Activated B cell treated with CpG ODN at 0.5 μM for 24 hours (primary cell): ENCODE measurements at regions of chr6 and their contacts with region 1.

Region 1: DNA sequence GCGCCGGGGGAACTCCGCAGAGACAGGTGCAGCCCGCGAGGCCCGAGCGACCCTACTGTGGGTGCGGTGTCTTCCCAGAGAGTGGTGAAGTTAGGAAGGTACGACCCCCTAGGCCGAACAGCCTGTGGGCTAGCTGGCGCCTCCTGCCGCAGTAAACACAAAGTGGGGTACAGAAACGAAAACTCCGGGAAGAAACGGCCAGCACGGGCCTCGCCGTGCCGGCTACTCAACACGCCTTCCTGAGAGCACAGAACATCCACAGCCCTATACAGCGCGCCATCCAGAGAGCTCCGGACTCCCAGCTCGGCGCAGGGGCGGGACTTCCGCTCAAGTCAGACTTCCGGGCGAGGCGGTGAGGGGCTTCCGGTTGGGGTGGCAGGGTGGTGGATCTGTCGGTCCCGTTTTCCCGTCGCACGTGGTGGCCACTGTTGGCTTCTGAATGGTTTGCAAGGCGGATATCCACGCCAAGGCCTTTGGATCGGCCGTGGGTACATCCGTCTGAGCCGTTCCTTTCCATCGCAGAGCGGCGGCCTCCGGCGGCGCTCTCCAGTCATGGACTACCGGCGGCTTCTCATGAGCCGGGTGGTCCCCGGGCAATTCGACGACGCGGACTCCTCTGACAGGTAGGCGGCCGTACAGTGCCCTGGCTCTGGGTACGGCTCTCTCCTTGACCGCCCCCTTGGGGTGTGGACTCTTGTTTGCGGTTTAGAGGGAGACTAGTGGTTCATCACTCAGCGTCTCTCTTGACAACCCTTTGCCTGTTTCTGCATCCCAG is at the starts of genes CAGE1 and RIOK1:
- DNase-seq: peak; percentile 93
- ATAC-seq: peak; percentile 87
- H3K4me3 Mint-ChIP-seq: peak within 1 kb of the TSS; percentile 96
- H3K27ac Mint-ChIP-seq: peak within 1 kb of the TSS; percentile 100
- H3K4me1 Mint-ChIP-seq: peaks cover 34% of the 10 kb centered on the region
- H3K27me3 Mint-ChIP-seq: no peaks in the 10 kb centered on the region
- CTCF ChIP-seq: no peak
- total RNA-seq, gene CAGE1: 0.07 and 0.20 TPM in 2 replicates
- total RNA-seq, gene RIOK1: 38.3 and 38.7 TPM in 2 replicates

Region 2: DNA sequence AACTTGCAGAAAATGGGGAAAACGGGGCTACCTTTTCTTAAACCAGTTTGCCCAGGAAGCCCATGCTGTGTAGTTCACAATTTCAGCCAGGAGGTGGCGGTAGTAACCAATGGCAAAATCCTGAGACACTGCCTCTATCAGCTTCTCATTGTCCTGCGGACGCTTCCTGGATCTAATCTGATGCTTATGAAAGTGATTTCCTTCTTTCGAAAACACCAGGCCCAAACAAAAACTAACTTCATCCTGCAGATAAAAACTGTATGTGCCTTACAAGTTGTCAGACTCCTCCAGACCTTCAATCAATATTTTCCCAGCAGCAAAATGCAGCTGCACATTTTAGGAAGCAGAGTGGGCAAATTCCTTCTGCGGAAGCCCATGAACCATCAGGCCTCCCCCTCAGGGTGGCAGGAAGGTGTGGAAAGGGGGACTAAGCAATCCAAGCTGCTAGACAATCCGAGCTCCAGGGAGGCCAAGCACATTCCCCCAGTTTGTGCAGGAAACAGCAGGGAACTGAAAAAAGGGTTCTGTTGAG is 712.7 kb before region 1 on chr6:
- CTCF ChIA-PET with region 1: no interaction called
- POLR2A ChIA-PET with region 1: no interaction called
- intact Hi-C with region 1: loop called (anchors 5 kb)
- DNase-seq: peak; percentile 65
- ATAC-seq: peak; percentile 94
- H3K4me3 Mint-ChIP-seq: no peak overlapping the region
- H3K27ac Mint-ChIP-seq: no peak overlapping the region
- H3K4me1 Mint-ChIP-seq: peaks cover 8% of the 10 kb centered on the region
- H3K27me3 Mint-ChIP-seq: peaks cover 6% of the 10 kb centered on the region
- CTCF ChIP-seq: peak; percentile 95

Region 3: DNA sequence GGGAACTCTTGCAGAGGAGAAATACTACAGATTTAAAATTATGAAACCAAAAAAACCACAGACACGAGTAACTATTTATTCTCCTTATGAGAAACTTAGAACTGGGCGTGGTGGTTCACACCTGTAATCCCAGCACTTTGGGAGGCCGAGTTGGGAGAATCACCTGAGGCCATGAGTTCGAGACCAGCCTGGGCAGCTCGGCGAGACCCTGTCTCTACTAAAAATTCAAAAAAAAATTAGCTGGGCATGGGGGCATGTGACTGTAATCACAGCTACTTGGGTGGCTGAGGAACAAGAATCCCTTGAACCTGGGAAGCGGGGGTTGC is 113.5 kb before region 1 on chr6:
- CTCF ChIA-PET with region 1: interaction called, 39 read pairs
- POLR2A ChIA-PET with region 1: interaction called, 75 read pairs
- intact Hi-C with region 1: loop called (anchors 1 kb)
- DNase-seq: no peak
- ATAC-seq: no peak
- H3K4me3 Mint-ChIP-seq: peak overlapping the region; percentile 53
- H3K27ac Mint-ChIP-seq: peak overlapping the region; percentile 67
- H3K4me1 Mint-ChIP-seq: peaks cover 36% of the 10 kb centered on the region
- H3K27me3 Mint-ChIP-seq: no peaks in the 10 kb centered on the region
- CTCF ChIP-seq: no peak

Region 4: DNA sequence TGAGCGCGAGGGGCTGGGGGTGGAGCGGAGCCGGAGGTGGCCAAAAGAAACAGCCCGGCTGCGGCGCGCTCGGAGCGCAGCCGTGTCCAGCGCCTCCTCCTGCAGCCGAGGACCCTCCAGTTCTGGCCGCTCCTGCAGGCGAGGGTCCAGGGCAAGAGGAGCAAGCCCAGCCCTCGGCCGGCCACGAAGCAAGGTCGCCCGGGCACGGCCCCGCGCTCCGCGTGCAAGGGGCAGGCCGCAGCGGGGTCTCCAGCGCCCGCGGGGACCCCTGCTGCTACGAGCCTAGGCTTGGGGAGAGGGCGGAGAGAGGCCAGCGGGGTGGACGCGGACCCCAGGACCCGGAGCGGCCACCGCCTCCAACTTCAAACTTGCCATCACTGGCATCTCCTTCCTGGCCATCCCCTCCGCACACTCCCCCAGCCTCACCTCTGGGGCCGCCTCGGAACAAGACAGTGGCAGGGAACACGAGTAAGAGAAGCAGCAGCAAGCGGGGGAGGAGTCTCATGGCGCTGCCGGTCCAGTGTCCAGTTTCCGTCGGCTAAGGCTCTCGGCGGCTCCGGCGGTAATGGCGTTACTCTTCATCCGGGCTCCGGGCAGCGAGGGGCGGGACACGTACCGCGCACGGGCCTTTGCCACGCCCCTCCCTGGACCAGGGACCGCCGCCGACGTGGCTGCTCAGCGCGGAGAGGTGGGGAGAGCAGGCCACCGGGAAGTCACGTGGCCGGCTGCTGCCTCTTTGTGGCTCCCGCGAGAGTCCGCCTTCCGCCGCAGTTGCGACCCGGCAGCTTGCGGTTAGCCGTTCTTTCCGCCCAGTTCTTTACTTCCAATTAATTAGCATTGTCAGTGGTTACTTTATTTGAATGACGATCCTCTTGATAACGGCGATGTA is 76.8 kb before region 1 on chr6 and contains the start of gene SSR1:
- CTCF ChIA-PET with region 1: no interaction called
- POLR2A ChIA-PET with region 1: interaction called, 75 read pairs
- intact Hi-C with region 1: loop called (anchors 1 kb)
- DNase-seq: peak; percentile 94
- ATAC-seq: peak; percentile 98
- H3K4me3 Mint-ChIP-seq: peak within 1 kb of the TSS; percentile 94
- H3K27ac Mint-ChIP-seq: peak within 1 kb of the TSS; percentile 84
- H3K4me1 Mint-ChIP-seq: peaks cover 39% of the 10 kb centered on the region
- H3K27me3 Mint-ChIP-seq: no peaks in the 10 kb centered on the region
- CTCF ChIP-seq: no peak
- total RNA-seq, gene SSR1: 83.4 and 86.7 TPM in 2 replicates

Region 5: GRCh38 chr6:7406743-7407142 is 17.1 kb after region 1 on chr6:
- CTCF ChIA-PET with region 1: no interaction called
- POLR2A ChIA-PET with region 1: no interaction called
- intact Hi-C with region 1: no loop called
- DNase-seq: no peak
- ATAC-seq: no peak
- H3K4me3 Mint-ChIP-seq: no peak overlapping the region
- H3K27ac Mint-ChIP-seq: no peak overlapping the region
- H3K4me1 Mint-ChIP-seq: no peaks in the 10 kb centered on the region
- H3K27me3 Mint-ChIP-seq: no peaks in the 10 kb centered on the region
- CTCF ChIP-seq: no peak

Region 6: DNA sequence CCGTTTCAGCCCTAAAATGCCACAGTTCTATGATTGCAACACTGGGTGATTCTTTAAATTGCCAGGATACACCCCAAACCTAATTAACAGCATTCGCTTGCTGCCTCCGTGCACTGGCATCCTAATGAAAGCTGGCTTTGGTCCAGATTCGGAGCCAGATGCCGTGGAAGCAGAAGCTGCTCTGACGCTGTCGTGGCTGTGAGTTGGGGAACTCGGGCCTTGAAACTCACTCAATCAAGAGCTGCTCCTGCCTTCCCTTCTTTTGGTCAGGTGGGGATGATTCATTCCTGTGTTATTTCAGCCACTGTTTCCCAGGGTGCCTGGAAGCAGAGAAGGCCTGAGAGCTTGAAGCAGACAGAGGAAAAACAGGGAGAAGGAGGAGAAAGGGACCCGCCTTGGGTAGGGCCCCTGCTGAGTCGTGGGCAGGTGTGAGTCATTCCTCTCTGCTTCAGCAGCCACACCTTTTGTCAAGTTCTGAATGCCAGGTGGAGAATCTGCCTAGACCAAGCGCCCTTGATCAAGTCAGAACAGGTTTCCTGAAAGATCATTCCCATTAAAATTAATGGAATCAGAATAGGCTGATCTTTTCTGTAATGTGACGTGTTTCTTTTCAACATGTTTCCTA is 115.7 kb after region 1 on chr6:
- CTCF ChIA-PET with region 1: no interaction called
- POLR2A ChIA-PET with region 1: no interaction called
- intact Hi-C with region 1: no loop called
- DNase-seq: no peak
- ATAC-seq: no peak
- H3K4me3 Mint-ChIP-seq: no peak overlapping the region
- H3K27ac Mint-ChIP-seq: no peak overlapping the region
- H3K4me1 Mint-ChIP-seq: peaks cover 8% of the 10 kb centered on the region
- H3K27me3 Mint-ChIP-seq: peaks cover 7% of the 10 kb centered on the region
- CTCF ChIP-seq: no peak

Region 7: GRCh38 chr6:7589949-7590917 is 200.6 kb after region 1 on chr6 and contains the start of gene SNRNP48:
- CTCF ChIA-PET with region 1: no interaction called
- POLR2A ChIA-PET with region 1: interaction called, 17 read pairs
- intact Hi-C with region 1: loop called (anchors 1 kb)
- DNase-seq: peak; percentile 88
- ATAC-seq: peak; percentile 100
- H3K4me3 Mint-ChIP-seq: peak within 1 kb of the TSS; percentile 98
- H3K27ac Mint-ChIP-seq: peak within 1 kb of the TSS; percentile 84
- H3K4me1 Mint-ChIP-seq: peaks cover 31% of the 10 kb centered on the region
- H3K27me3 Mint-ChIP-seq: no peaks in the 10 kb centered on the region
- CTCF ChIP-seq: no peak
- total RNA-seq, gene SNRNP48: 15.4 and 18.7 TPM in 2 replicates